CD4-positive, alpha-beta T cell (primary cell): ENCODE measurements at regions of chrX and their contacts with region 1.

Region 1: DNA sequence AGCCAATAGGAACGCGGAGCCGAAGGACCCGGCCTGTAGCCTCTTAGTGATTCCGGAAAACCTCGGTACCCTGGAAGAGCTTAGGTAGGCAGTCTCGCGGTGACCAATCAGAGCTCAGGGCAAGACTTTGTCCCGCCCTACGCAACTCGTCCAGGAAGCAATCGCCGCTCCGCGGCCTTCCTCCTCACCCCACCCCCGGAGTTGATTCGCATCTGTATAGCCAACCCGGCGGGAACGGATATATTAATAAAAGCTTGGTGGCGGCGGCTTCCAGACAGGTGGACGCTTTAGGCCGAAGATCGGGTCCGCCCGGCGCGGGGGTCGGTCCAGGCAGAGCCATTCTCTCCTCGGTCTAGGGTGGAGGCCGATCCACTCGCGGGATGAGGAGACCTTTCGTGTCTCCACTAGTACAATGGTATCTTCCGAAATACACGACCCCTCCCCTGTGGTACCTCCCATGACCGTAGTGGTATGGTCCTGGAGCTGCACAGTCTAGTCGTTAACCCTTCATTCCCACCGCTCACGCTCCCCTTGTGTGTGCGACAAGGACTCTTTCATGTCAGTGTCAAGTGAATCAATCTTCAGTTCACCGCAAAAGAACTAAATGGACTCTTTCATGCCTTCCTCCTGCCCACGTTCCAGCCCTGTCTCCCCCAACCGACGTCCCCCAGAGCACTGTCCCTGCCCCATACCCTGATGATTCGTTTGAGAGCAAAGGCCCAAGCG is 24.2 kb upstream of the GLOD5 start:
- DNase-seq: peak; percentile 72 to 97 (median 84)
- ATAC-seq: peak; percentile 94
- H3K4me3 ChIP-seq: peak overlapping the region; percentile 74
- H3K4me3 Mint-ChIP-seq: peak overlapping the region; percentile 92
- H3K27ac ChIP-seq: peak overlapping the region; percentile 76 to 92
- H3K27ac Mint-ChIP-seq: peak overlapping the region; percentile 96
- H3K4me1 ChIP-seq: peaks cover 17% of the 10 kb centered on the region
- H3K4me1 Mint-ChIP-seq: peaks cover 24% of the 10 kb centered on the region
- H3K27me3 ChIP-seq: no peaks in the 10 kb centered on the region
- H3K27me3 Mint-ChIP-seq: no peaks in the 10 kb centered on the region
- CTCF ChIP-seq: no peak

Region 2: GRCh38 chrX:48683411-48683982 is 53.9 kb before region 1 on chrX and contains the start of gene WAS:
- CTCF ChIA-PET with region 1: no interaction called
- POLR2A ChIA-PET with region 1: interaction called, 26 read pairs
- intact Hi-C with region 1: loop called in 1 of 2 experiments (anchors 5 kb)
- DNase-seq: peak in 12 of 14 experiments; percentile 14 to 76 (median 36)
- ATAC-seq: peak; percentile 85
- H3K4me3 ChIP-seq: peak within 1 kb of the TSS; percentile 82
- H3K4me3 Mint-ChIP-seq: peak within 1 kb of the TSS; percentile 95
- H3K27ac ChIP-seq: peak within 1 kb of the TSS; percentile 73 to 83
- H3K27ac Mint-ChIP-seq: peak within 1 kb of the TSS; percentile 96
- H3K4me1 ChIP-seq: peaks cover 61% of the 10 kb centered on the region
- H3K4me1 Mint-ChIP-seq: peaks cover 50% of the 10 kb centered on the region
- H3K27me3 ChIP-seq: no peaks in the 10 kb centered on the region
- H3K27me3 Mint-ChIP-seq: no peaks in the 10 kb centered on the region
- CTCF ChIP-seq: no peak
- total RNA-seq, gene WAS: 63.7 to 67.4 TPM

Region 3: GRCh38 chrX:48715072-48715471 is 22.3 kb before region 1 on chrX:
- CTCF ChIA-PET with region 1: interaction called, 4 read pairs
- POLR2A ChIA-PET with region 1: interaction called, 53 read pairs
- intact Hi-C with region 1: loop called in 1 of 2 experiments (anchors 1 kb)
- DNase-seq: peak in 1 of 14 experiments; percentile 29
- ATAC-seq: peak; percentile 22
- H3K4me3 ChIP-seq: no peak overlapping the region
- H3K4me3 Mint-ChIP-seq: peak overlapping the region; percentile 26
- H3K27ac ChIP-seq: no peak overlapping the region
- H3K27ac Mint-ChIP-seq: peak overlapping the region; percentile 93
- H3K4me1 ChIP-seq: peaks cover 80% of the 10 kb centered on the region
- H3K4me1 Mint-ChIP-seq: peaks cover 86% of the 10 kb centered on the region
- H3K27me3 ChIP-seq: no peaks in the 10 kb centered on the region
- H3K27me3 Mint-ChIP-seq: no peaks in the 10 kb centered on the region
- CTCF ChIP-seq: no peak

Region 4: GRCh38 chrX:48897621-48898306 is 160.4 kb after region 1 on chrX and contains the starts of genes PQBP1 and TIMM17B:
- CTCF ChIA-PET with region 1: interaction called, 3 read pairs
- POLR2A ChIA-PET with region 1: interaction called, 14 read pairs
- intact Hi-C with region 1: loop called in 1 of 2 experiments (anchors 5 kb)
- DNase-seq: peak; percentile 73 to 96 (median 84)
- ATAC-seq: peak; percentile 84
- H3K4me3 ChIP-seq: peak within 1 kb of the TSS; percentile 91
- H3K4me3 Mint-ChIP-seq: peak within 1 kb of the TSS; percentile 91
- H3K27ac ChIP-seq: peak within 1 kb of the TSS; percentile 93 to 98
- H3K27ac Mint-ChIP-seq: peak within 1 kb of the TSS; percentile 90
- H3K4me1 ChIP-seq: peaks cover 33% of the 10 kb centered on the region
- H3K4me1 Mint-ChIP-seq: peaks cover 27% of the 10 kb centered on the region
- H3K27me3 ChIP-seq: no peaks in the 10 kb centered on the region
- H3K27me3 Mint-ChIP-seq: no peaks in the 10 kb centered on the region
- CTCF ChIP-seq: no peak
- total RNA-seq, gene PQBP1: 73.0 to 76.6 TPM
- total RNA-seq, gene TIMM17B: 40.0 to 40.3 TPM

Region 5: GRCh38 chrX:48937054-48937907 is 199.9 kb after region 1 on chrX:
- CTCF ChIA-PET with region 1: no interaction called
- POLR2A ChIA-PET with region 1: interaction called, 11 read pairs
- intact Hi-C with region 1: no loop called
- DNase-seq: peak; percentile 77 to 94 (median 88)
- ATAC-seq: peak; percentile 68
- H3K4me3 ChIP-seq: peak overlapping the region; percentile 49
- H3K4me3 Mint-ChIP-seq: peak overlapping the region; percentile 82
- H3K27ac ChIP-seq: peak overlapping the region; percentile 92 to 93
- H3K27ac Mint-ChIP-seq: peak overlapping the region; percentile 98
- H3K4me1 ChIP-seq: peaks cover 85% of the 10 kb centered on the region
- H3K4me1 Mint-ChIP-seq: peaks cover 90% of the 10 kb centered on the region
- H3K27me3 ChIP-seq: no peaks in the 10 kb centered on the region
- H3K27me3 Mint-ChIP-seq: no peaks in the 10 kb centered on the region
- CTCF ChIP-seq: peak; percentile 40